ENCODE measurements at regions of chr12 and their contacts with region 1.

Region 1: DNA sequence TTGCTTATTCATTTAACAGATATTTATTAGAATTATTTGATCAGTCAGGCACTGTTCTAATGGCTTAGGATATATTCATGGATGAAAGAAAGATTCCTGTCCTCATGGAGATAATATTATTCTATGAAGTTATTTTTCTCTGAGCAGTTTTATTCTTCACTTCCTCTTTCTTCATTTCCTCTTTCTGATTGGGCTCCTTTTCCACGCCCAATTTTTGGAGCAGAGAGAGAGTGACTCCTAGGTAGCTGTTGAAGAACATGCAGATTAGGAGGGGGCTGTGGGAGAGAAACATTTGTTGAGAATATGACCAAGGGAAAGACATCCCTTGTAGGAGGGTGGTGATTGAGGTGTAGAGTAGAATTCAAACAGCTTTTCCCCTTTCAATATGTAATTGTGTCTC is 6.0 kb upstream of the YARS2 start:
- DNase-seq: no peak
- H3K4me3 ChIP-seq: no peak overlapping the region
- H3K27ac ChIP-seq: no peak overlapping the region
- H3K4me1 ChIP-seq: no peaks in the 10 kb centered on the region
- H3K27me3 ChIP-seq: no peaks in the 10 kb centered on the region
- CTCF ChIP-seq: no peak
- POLR2A ChIP-seq: no peak

Region 2: DNA sequence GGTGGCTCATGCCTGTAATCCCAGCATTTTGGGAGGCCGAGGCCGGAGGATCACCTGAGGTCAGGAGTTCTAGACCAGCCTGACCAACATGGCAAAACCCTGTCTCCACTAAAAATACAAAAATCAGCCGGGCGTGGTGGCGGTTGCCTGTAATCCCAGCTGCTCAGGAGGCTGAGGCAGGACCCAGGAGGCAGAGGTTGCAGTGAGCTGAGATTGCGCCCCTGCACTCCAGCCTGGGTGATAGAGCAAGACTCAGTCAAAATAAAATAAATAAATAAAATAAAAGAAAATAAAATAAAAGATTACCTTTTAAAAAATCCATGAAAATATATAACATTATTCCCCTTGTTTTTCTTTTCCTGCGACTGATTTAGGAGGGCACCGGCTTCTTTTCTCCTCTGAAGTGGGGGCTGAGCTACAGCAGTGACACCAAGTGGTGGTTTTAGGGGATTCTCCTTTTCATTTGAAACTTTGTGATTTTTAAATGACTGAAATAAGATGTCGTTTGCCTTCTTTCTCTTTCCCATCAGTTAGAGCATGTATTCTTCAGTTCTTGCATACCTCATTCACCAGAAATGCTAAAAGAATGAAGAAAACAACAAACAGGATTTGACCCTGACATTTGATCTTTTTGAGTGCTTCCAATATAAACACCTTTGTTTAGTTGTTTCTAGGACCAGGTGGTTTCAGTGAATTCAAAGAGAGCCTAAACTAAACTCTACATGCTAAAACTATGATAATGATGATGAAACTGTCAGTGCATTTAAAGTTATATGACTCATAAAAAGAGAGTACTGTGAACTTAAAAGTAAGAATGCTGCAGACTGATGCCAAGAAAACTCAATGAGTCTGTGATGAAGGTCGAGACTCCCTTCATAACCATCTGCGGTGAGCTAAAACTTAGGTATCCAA is 157.4 kb after region 1 on chr12:
- intact Hi-C with region 1: loop called in 1 of 2 experiments (anchors 10 kb)
- DNase-seq: no peak
- H3K4me3 ChIP-seq: no peak overlapping the region
- H3K27ac ChIP-seq: no peak overlapping the region
- H3K4me1 ChIP-seq: no peaks in the 10 kb centered on the region
- H3K27me3 ChIP-seq: no peaks in the 10 kb centered on the region
- CTCF ChIP-seq: peak; percentile 29 to 55 (median 42)
- POLR2A ChIP-seq: no peak